Calu3 (cell line): ENCODE measurements at regions of chr7 and their contacts with region 1.

Region 1: DNA sequence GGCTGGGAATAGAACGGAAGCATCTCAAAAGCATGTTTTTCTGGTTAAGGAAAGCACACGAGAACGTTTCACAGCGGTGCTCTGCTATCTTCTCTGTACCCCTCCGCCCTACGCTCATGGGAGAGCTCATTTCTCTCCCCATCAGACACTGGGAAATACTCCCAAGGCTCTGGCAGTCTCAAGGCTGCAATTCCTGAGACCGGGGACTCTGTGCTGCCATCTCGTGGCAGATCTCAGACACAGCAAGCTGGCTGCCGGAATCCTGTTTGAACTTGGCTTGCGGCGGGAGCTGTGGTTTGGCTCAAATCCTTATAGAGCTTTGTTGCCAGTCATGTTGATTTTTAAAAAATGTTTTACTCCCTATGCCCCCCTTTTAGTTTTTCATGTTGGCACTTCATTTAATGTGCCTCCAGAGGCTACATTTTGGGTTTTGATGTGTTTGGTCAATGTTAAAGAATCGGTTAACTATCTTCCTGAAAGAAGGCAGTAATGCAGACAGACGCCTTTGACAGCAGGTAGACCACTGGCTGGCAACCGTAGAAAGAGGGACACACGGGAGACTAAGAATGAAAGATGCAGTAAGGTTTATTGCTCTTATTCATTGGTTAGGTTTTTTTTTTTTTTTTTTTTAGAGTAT is 27.6 kb downstream of the BMPER start:
- DNase-seq: peak; percentile 87
- H3K4me3 Mint-ChIP-seq: no peak overlapping the region
- H3K27ac Mint-ChIP-seq: no peak overlapping the region
- H3K4me1 Mint-ChIP-seq: no peaks in the 10 kb centered on the region
- H3K27me3 Mint-ChIP-seq: peaks cover 59% of the 10 kb centered on the region
- CTCF ChIP-seq: peak; percentile 97

Region 2: DNA sequence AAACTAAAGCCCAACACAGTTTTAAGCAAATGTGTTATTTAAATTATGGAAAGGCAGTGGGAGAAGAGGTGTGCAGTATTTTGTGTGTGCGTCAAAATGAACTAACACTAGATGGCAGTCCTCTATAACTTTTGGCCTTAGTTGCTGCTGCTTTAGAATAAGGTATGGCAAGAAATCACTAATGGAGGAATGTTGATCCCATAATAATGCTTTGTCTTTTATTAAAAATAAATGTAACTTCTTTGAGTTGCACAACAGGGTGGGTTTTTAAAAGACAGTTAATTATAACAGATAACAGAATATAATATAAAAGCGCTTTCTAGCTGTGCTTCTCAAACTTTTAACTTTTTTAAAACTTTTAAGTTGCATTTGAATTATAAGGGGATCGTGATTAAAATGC is 747.2 kb before region 1 on chr7:
- CTCF ChIA-PET with region 1: interaction called, 9 read pairs
- intact Hi-C with region 1: loop called (anchors 1 kb)
- DNase-seq: peak; percentile 53
- H3K4me3 Mint-ChIP-seq: no peak overlapping the region
- H3K27ac Mint-ChIP-seq: no peak overlapping the region
- H3K4me1 Mint-ChIP-seq: peaks cover 6% of the 10 kb centered on the region
- H3K27me3 Mint-ChIP-seq: no peaks in the 10 kb centered on the region
- CTCF ChIP-seq: peak; percentile 64

Region 3: GRCh38 chr7:33334349-33334748 is 598.6 kb before region 1 on chr7:
- CTCF ChIA-PET with region 1: interaction called, 6 read pairs
- intact Hi-C with region 1: loop called (anchors 10 kb)
- DNase-seq: peak; percentile 28
- H3K4me3 Mint-ChIP-seq: no peak overlapping the region
- H3K27ac Mint-ChIP-seq: no peak overlapping the region
- H3K4me1 Mint-ChIP-seq: no peaks in the 10 kb centered on the region
- H3K27me3 Mint-ChIP-seq: peaks cover 15% of the 10 kb centered on the region
- CTCF ChIP-seq: peak; percentile 58

Region 4: GRCh38 chr7:33757562-33758165 is 175.3 kb before region 1 on chr7:
- CTCF ChIA-PET with region 1: interaction called, 7 read pairs
- intact Hi-C with region 1: loop called (anchors 1 kb)
- DNase-seq: peak; percentile 53
- H3K4me3 Mint-ChIP-seq: no peak overlapping the region
- H3K27ac Mint-ChIP-seq: no peak overlapping the region
- H3K4me1 Mint-ChIP-seq: no peaks in the 10 kb centered on the region
- H3K27me3 Mint-ChIP-seq: peaks cover 84% of the 10 kb centered on the region
- CTCF ChIP-seq: peak; percentile 83

Region 5: DNA sequence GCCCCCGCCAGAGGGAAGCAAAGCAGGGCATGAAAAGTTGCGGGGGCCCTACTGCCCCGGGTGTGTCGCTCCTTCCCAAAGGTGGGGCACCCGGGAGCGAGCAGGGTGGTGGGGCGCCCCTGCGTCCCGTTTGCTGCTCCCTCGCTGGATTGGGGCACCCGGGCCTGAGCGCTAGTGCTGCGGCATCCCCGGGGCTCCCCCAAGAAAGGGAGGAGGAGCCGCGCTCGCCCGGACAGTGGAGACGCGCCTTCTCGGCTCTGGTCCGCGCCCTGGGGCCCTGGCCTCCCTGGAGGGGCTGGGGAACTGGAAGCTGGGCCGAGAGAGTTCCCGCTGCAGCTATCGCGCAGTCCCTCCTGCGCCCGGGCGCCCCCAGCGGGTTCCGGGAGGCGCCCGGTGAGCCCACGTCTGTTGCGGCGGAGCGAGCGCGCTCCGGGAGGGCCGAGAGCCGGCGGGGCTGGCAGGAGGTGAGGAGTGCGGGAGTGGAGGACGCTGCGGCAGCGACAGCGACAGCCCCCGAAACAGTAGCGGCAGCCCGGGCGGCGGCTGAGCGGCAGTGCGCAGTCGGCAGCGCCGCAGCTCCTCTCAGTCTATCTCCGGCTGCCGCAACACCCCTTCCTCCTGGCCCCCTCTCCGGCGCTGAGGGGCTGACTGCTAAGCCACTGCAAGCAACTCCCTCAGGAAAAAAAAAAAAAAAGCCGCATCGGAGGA is 28.1 kb before region 1 on chr7:
- CTCF ChIA-PET with region 1: interaction called, 5 read pairs
- intact Hi-C with region 1: loop called (anchors 2 kb)
- DNase-seq: peak; percentile 66
- H3K4me3 Mint-ChIP-seq: peak overlapping the region; percentile 73
- H3K27ac Mint-ChIP-seq: no peak overlapping the region
- H3K4me1 Mint-ChIP-seq: no peaks in the 10 kb centered on the region
- H3K27me3 Mint-ChIP-seq: peaks cover 94% of the 10 kb centered on the region
- CTCF ChIP-seq: no peak

Region 6: GRCh38 chr7:34091323-34091917 is 158.5 kb after region 1 on chr7:
- CTCF ChIA-PET with region 1: interaction called, 14 read pairs
- intact Hi-C with region 1: no loop called
- DNase-seq: peak; percentile 66
- H3K4me3 Mint-ChIP-seq: no peak overlapping the region
- H3K27ac Mint-ChIP-seq: no peak overlapping the region
- H3K4me1 Mint-ChIP-seq: no peaks in the 10 kb centered on the region
- H3K27me3 Mint-ChIP-seq: peaks cover 18% of the 10 kb centered on the region
- CTCF ChIP-seq: peak; percentile 61